ENCODE measurements at regions of chr2 and their contacts with region 1.

Region 1: DNA sequence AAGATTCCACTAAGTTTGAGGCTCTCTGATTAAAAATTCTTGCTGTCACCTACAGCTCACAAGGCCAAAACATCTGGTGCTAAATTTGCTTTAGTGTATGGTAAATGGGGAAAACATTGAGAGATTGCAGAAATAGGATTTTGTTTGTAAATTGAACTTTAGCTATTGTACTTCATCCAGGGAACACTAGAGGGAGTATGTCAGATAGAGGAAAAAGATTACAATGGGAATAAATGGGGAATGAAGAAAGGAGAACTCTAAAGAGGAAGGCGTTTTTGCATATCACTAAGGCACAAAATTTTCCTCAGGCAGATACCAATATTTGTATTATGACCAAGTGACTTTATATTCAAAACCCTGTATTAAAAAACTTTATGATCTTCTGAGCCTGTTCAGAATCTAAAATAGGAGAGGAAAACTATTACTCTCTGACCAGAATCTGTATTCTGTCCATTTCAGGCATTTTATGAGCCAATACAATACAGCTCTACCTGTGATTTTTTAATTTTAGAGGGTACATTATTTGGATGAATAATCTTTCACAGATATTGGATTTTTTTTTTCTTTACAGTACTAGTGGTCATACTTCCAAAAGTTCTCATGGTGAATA is 52.3 kb upstream of the ITGB6 start:
- DNase-seq: no peak
- H3K4me3 ChIP-seq: no peak overlapping the region
- H3K4me3 Mint-ChIP-seq: no peak overlapping the region
- H3K27ac ChIP-seq: no peak overlapping the region
- H3K27ac Mint-ChIP-seq: no peak overlapping the region
- H3K4me1 ChIP-seq: no peaks in the 10 kb centered on the region
- H3K4me1 Mint-ChIP-seq: no peaks in the 10 kb centered on the region
- H3K27me3 ChIP-seq: no peaks in the 10 kb centered on the region
- H3K27me3 Mint-ChIP-seq: peaks cover 4 to 19% of the 10 kb centered on the region in 2 donors

Region 2: GRCh38 chr2:160269803-160270570 is 17.6 kb after region 1 on chr2:
- CTCF ChIA-PET with region 1: interaction called, 13 read pairs
- POLR2A ChIA-PET with region 1: no interaction called
- DNase-seq: peak; percentile 62 to 81 (median 66)
- H3K4me3 ChIP-seq: peak overlapping the region; percentile 46
- H3K4me3 Mint-ChIP-seq: peak overlapping the region; percentile 74 to 95 (median 87)
- H3K27ac ChIP-seq: peak overlapping the region; percentile 20
- H3K27ac Mint-ChIP-seq: peak overlapping the region; percentile 79 to 96 (median 92)
- H3K4me1 ChIP-seq: peaks cover 15% of the 10 kb centered on the region
- H3K4me1 Mint-ChIP-seq: peaks cover 27 to 46% (median 40%) of the 10 kb centered on the region in 3 donors
- H3K27me3 ChIP-seq: no peaks in the 10 kb centered on the region
- H3K27me3 Mint-ChIP-seq: peaks cover 0 to 1% of the 10 kb centered on the region in 2 donors